Activated CD4-positive, alpha-beta T cell treated with anti-CD3 and anti-CD28 coated beads for 36 hours (primary cell): ENCODE measurements at regions of chr2 and their contacts with region 1.

Region 1: GRCh38 chr2:156589381-156590079 is 153.4 kb downstream of the GPD2 start:
- DNase-seq: peak; percentile 31
- ATAC-seq: no peak
- H3K4me3 Mint-ChIP-seq: no peak overlapping the region
- H3K27ac Mint-ChIP-seq: no peak overlapping the region
- H3K4me1 Mint-ChIP-seq: peaks cover 4% of the 10 kb centered on the region
- H3K27me3 Mint-ChIP-seq: no peaks in the 10 kb centered on the region

Region 2: DNA sequence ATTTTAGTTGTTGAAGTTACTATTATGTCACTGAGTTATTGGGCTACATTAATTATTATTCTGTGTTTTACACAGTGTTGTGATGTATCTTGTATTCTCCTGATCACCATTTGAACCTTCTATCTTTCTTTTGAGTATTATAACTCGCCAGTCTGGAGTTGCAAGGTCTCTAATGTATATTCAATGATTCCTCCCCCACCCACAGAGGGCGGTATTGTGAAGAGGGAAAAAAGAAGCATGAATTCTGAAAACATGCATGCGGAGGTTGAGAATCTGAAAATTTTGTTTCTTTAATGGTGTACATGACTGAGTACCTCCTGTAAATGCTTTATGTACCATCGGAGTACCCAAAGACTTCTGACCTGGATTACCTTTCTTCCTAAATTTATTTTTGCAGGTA is 523.6 kb before region 1 on chr2:
- CTCF ChIA-PET with region 1: no interaction called
- POLR2A ChIA-PET with region 1: no interaction called
- intact Hi-C with region 1: loop called in 1 of 2 experiments (anchors 2 kb)
- DNase-seq: peak; percentile 10
- ATAC-seq: no peak
- H3K4me3 Mint-ChIP-seq: no peak overlapping the region
- H3K27ac Mint-ChIP-seq: no peak overlapping the region
- H3K4me1 Mint-ChIP-seq: no peaks in the 10 kb centered on the region
- H3K27me3 Mint-ChIP-seq: peaks cover 2% of the 10 kb centered on the region

Region 3: DNA sequence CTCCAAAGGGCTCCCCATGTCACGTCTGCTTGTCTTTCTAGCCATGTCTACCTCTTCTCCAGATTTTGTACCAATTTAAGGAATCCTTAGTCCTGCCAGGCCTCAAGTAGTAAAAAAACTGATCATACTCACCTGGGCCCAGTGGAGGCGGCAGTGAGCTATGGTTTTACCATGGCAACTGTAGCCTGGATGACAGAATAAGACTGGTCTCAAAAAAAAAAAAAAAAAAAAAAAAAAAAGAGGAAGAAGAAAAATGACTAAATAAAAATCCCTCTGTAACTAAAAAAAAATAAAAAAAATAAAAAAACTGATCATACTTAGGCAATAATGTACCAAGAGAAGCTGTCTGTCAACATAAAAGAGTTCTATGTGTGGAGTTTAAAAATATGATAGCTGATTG is 478.6 kb before region 1 on chr2:
- CTCF ChIA-PET with region 1: no interaction called
- POLR2A ChIA-PET with region 1: no interaction called
- intact Hi-C with region 1: loop called in 1 of 2 experiments (anchors 2 kb)
- DNase-seq: peak; percentile 55
- ATAC-seq: peak; percentile 47
- H3K4me3 Mint-ChIP-seq: no peak overlapping the region
- H3K27ac Mint-ChIP-seq: no peak overlapping the region
- H3K4me1 Mint-ChIP-seq: no peaks in the 10 kb centered on the region
- H3K27me3 Mint-ChIP-seq: no peaks in the 10 kb centered on the region

Region 4: DNA sequence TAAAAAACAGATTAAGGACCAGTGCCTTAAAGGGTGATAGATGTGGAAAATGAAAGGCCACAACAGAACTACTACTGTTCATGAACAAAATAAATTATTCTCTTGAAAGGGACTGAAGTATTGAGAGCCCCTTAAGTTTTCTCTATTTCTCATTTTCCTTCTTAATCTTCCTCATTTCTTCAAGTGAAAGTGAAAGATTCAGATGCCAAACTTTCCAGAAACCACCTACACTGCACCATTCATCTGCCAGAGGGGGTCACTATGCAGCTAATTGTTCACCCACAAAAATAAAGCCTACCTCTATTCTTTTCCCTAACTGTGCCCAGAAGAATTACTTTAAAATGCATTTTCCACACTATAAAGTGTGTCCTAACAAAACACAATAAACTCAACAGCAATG is 397.1 kb before region 1 on chr2:
- CTCF ChIA-PET with region 1: interaction called, 9 read pairs
- POLR2A ChIA-PET with region 1: no interaction called
- intact Hi-C with region 1: loop called in 1 of 2 experiments (anchors 2 kb)
- DNase-seq: peak; percentile 11
- ATAC-seq: peak; percentile 53
- H3K4me3 Mint-ChIP-seq: no peak overlapping the region
- H3K27ac Mint-ChIP-seq: no peak overlapping the region
- H3K4me1 Mint-ChIP-seq: peaks cover 8% of the 10 kb centered on the region
- H3K27me3 Mint-ChIP-seq: peaks cover 2% of the 10 kb centered on the region

Region 5: GRCh38 chr2:156341452-156342253 is 247.9 kb before region 1 on chr2:
- CTCF ChIA-PET with region 1: interaction called, 24 read pairs
- POLR2A ChIA-PET with region 1: no interaction called
- intact Hi-C with region 1: loop called in 1 of 2 experiments (anchors 1 kb)
- DNase-seq: peak; percentile 94
- ATAC-seq: peak; percentile 79
- H3K4me3 Mint-ChIP-seq: peak overlapping the region; percentile 84
- H3K27ac Mint-ChIP-seq: peak overlapping the region; percentile 95
- H3K4me1 Mint-ChIP-seq: peaks cover 53% of the 10 kb centered on the region
- H3K27me3 Mint-ChIP-seq: no peaks in the 10 kb centered on the region

Region 6: DNA sequence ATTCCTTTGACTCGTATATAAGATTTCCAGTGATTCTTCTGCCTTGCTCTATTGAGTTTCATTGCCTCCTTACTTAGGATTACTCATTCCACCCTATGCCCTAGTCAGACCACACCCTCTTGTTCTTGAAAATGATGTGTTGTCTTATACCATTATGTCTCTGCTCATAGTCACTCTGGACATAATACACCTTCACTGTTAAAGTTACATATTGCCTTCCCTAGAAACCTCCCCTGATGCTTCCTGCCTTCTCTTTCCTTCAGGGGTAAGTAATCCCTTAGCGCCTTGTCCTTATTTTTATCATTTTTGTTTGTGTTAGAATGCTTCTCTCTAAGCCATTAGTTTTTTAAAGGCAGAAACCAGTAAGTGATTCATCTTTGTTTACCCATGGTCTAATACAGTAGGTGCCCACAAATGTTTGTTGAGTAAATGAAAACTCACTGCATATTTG is 134.1 kb before region 1 on chr2:
- CTCF ChIA-PET with region 1: no interaction called
- POLR2A ChIA-PET with region 1: no interaction called
- intact Hi-C with region 1: no loop called
- DNase-seq: no peak
- ATAC-seq: peak; percentile 99
- H3K4me3 Mint-ChIP-seq: no peak overlapping the region
- H3K27ac Mint-ChIP-seq: no peak overlapping the region
- H3K4me1 Mint-ChIP-seq: peaks cover 28% of the 10 kb centered on the region
- H3K27me3 Mint-ChIP-seq: no peaks in the 10 kb centered on the region

Region 7: DNA sequence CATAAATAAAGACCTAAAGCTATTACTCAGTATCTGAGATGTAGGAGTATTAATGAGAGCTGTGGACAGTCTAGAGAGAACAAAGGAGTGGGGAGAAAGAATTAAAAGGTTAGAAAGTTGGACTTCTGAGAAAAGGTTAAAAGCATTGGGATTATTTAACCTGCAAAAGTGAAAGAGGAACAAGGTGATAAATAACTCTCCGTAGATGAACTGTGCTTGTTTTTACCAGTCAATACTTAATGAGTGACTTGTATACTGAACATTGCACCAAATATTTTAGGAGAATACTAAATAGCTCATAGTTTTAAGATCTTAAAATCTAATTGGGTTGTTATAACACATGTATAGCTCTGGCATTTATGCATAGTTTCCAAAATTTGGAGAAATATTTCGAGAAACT is 15.8 kb before region 1 on chr2:
- CTCF ChIA-PET with region 1: interaction called, 18 read pairs
- POLR2A ChIA-PET with region 1: no interaction called
- intact Hi-C with region 1: no loop called
- DNase-seq: no peak
- ATAC-seq: no peak
- H3K4me3 Mint-ChIP-seq: no peak overlapping the region
- H3K27ac Mint-ChIP-seq: no peak overlapping the region
- H3K4me1 Mint-ChIP-seq: peaks cover 12% of the 10 kb centered on the region
- H3K27me3 Mint-ChIP-seq: no peaks in the 10 kb centered on the region

Region 8: DNA sequence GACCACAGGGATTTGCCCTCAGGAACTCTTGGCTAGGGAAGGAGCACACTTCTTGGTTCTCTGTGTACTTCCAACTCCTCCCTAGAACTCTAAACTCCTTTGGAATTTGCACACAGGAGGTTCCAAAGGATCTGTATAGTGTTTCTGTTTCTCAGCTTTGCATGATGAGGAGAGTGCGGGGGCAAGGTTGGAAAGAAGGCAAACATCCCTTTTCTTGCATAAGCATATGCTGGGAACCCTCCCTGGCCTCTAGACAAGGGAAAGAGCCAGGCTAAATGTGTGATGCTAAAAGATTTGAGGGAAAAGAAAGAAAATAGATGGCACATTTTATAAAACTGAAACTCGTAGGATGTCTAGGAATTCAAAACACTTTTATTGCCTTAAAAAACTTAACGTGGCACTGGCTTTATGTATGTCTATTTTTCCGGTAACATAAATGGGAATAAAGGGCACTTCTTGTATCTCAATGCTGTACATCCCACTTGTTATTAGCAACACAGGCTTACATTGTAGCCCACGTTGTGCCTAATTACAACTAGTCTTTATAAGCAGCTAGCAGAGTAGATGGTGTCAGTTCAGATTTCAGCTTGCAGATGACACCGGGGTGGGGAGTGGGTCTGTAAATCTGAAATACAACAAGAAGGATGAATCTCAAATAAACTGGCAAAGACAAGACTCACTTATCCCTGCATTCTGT is 12.5 kb after region 1 on chr2:
- CTCF ChIA-PET with region 1: no interaction called
- POLR2A ChIA-PET with region 1: no interaction called
- intact Hi-C with region 1: no loop called
- DNase-seq: no peak
- ATAC-seq: no peak
- H3K4me3 Mint-ChIP-seq: no peak overlapping the region
- H3K27ac Mint-ChIP-seq: no peak overlapping the region
- H3K4me1 Mint-ChIP-seq: no peaks in the 10 kb centered on the region
- H3K27me3 Mint-ChIP-seq: peaks cover 6% of the 10 kb centered on the region

Region 9: GRCh38 chr2:157194097-157194688 is 604.7 kb after region 1 on chr2:
- CTCF ChIA-PET with region 1: interaction called, 4 read pairs
- POLR2A ChIA-PET with region 1: no interaction called
- intact Hi-C with region 1: loop called in 1 of 2 experiments (anchors 5 kb)
- DNase-seq: peak; percentile 21
- ATAC-seq: peak; percentile 63
- H3K4me3 Mint-ChIP-seq: no peak overlapping the region
- H3K27ac Mint-ChIP-seq: no peak overlapping the region
- H3K4me1 Mint-ChIP-seq: no peaks in the 10 kb centered on the region
- H3K27me3 Mint-ChIP-seq: peaks cover 2% of the 10 kb centered on the region